ENCODE measurements at regions of chr22 and their contacts with region 1.

Region 1: GRCh38 chr22:39932918-39933649 is 27.1 kb upstream of the TMA7B start:
- DNase-seq: peak; percentile 83
- ATAC-seq: peak; percentile 40
- H3K4me3 Mint-ChIP-seq: peak overlapping the region; percentile 68
- H3K27ac Mint-ChIP-seq: peak overlapping the region; percentile 85
- H3K4me1 Mint-ChIP-seq: peaks cover 56% of the 10 kb centered on the region
- H3K27me3 Mint-ChIP-seq: no peaks in the 10 kb centered on the region

Region 2: GRCh38 chr22:39900306-39901227 is 32.5 kb before region 1 on chr22 and contains the start of gene GRAP2:
- CTCF ChIA-PET with region 1: interaction called, 242 read pairs
- POLR2A ChIA-PET with region 1: interaction called, 412 read pairs
- DNase-seq: peak; percentile 90
- ATAC-seq: peak; percentile 95
- H3K4me3 Mint-ChIP-seq: peak within 1 kb of the TSS; percentile 95
- H3K27ac Mint-ChIP-seq: peak within 1 kb of the TSS; percentile 96
- H3K4me1 Mint-ChIP-seq: peaks cover 17% of the 10 kb centered on the region
- H3K27me3 Mint-ChIP-seq: no peaks in the 10 kb centered on the region
- total RNA-seq, gene GRAP2: 235 to 239 TPM

Region 3: GRCh38 chr22:39908737-39909136 is 24.3 kb before region 1 on chr22:
- CTCF ChIA-PET with region 1: interaction called, 242 read pairs
- POLR2A ChIA-PET with region 1: interaction called, 412 read pairs
- DNase-seq: peak; percentile 60
- ATAC-seq: peak; percentile 34
- H3K4me3 Mint-ChIP-seq: peak overlapping the region; percentile 95
- H3K27ac Mint-ChIP-seq: peak overlapping the region; percentile 97
- H3K4me1 Mint-ChIP-seq: peaks cover 72% of the 10 kb centered on the region
- H3K27me3 Mint-ChIP-seq: no peaks in the 10 kb centered on the region

Region 4: DNA sequence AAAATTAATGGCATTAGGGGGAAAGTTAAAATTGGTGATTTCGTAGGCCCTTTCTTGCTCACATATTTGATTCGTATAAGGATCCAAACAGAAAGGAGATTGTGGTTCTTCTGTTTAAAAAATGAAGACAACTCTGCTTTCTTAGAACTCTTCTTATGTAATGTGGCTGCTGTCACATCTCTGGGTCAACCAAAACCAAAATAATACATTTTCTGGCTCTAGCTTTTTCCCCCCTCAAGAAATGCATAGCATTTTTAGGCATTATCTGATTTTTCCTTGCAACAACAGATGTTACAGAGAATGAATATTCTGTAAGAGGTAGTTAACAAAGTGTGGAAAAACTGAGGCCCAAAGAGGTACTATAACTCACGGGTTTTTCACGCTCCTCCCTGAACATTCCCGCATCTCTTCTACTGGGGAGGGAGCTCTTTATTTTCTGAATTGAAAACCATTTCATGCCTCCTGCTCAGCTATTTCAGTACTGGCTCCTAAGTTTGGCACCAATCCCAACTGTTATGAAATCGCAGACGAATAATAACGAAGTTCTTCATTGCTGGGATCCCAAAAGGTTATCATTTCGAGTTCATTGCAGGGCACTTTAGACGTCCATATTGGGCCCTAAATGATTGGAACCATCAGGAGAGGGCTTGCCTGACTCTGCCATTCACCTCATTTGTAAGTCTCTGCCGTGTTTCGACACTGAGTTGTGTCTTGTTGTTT is 15.1 kb before region 1 on chr22:
- CTCF ChIA-PET with region 1: interaction called, 242 read pairs
- POLR2A ChIA-PET with region 1: interaction called, 412 read pairs
- DNase-seq: no peak
- ATAC-seq: no peak
- H3K4me3 Mint-ChIP-seq: peak overlapping the region; percentile 73
- H3K27ac Mint-ChIP-seq: peak overlapping the region; percentile 91
- H3K4me1 Mint-ChIP-seq: peaks cover 85% of the 10 kb centered on the region
- H3K27me3 Mint-ChIP-seq: no peaks in the 10 kb centered on the region

Region 5: GRCh38 chr22:39946503-39947219 is 13.6 kb after region 1 on chr22:
- CTCF ChIA-PET with region 1: interaction called, 79 read pairs
- POLR2A ChIA-PET with region 1: interaction called, 11 read pairs
- DNase-seq: no peak
- ATAC-seq: no peak
- H3K4me3 Mint-ChIP-seq: no peak overlapping the region
- H3K27ac Mint-ChIP-seq: peak overlapping the region; percentile 58
- H3K4me1 Mint-ChIP-seq: peaks cover 98% of the 10 kb centered on the region
- H3K27me3 Mint-ChIP-seq: no peaks in the 10 kb centered on the region

Region 6: GRCh38 chr22:39960791-39961746 is 28.0 kb after region 1 on chr22:
- CTCF ChIA-PET with region 1: interaction called, 15 read pairs
- POLR2A ChIA-PET with region 1: interaction called, 3 read pairs
- DNase-seq: peak; percentile 91
- ATAC-seq: peak; percentile 94
- H3K4me3 Mint-ChIP-seq: peak overlapping the region; percentile 60
- H3K27ac Mint-ChIP-seq: peak overlapping the region; percentile 86
- H3K4me1 Mint-ChIP-seq: peaks cover 75% of the 10 kb centered on the region
- H3K27me3 Mint-ChIP-seq: no peaks in the 10 kb centered on the region